Endothelial cell of umbilical vein (primary cell): ENCODE measurements at regions of chr15 and their contacts with region 1.

Region 1: DNA sequence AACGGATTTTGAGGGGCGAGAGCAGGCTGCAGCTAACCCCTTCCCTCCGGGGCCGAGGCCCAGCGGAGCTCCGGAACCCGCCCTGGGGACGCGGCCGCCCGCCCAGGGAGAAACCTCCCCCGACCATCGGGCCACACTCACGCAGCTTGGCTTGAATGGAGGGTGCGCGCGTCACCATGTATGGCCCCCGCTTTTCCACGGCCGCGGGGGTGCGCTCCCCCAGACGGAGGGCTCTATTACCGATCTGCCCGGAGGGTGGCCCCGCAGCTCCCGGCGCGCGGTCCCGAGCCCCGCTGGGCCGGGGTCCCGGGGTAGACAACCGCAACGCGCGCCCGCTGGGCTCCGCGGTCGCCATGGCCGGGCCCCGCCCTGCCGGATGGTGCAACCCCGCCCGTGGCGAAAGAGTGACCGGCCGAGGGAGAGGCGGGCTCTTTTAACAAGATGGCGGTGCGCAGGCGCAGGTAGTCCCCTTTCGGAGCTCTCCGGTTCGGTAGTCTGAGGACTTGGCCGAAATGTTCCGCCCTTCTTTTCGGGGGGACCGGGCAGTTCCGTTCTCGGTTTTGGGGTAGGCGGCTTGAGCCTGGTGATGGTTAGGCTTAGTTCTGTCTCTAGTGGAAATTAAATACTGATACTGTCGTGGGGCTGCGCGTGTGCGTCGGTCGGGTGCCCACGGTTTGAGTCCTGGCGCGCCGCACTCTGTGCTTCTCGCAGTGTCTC is at the start of gene FAM219B:
- DNase-seq: peak; percentile 87
- H3K4me3 ChIP-seq: peak within 1 kb of the TSS; percentile 38 to 79 (median 73)
- H3K27ac ChIP-seq: peak within 1 kb of the TSS; percentile 32
- H3K4me1 ChIP-seq: peaks cover 11% of the 10 kb centered on the region
- H3K27me3 ChIP-seq: no peaks in the 10 kb centered on the region
- CTCF ChIP-seq: no peak
- POLR2A ChIP-seq: peak; percentile 98
- total RNA-seq, gene FAM219B: 57.0 and 73.0 TPM in 2 replicates

Region 2: GRCh38 chr15:74809956-74810355 is 96.6 kb before region 1 on chr15:
- CTCF ChIA-PET with region 1: interaction called, 10 read pairs
- POLR2A ChIA-PET with region 1: no interaction called
- dilution Hi-C with region 1: no loop called
- intact Hi-C with region 1: no loop called
- DNase-seq: no peak
- H3K4me3 ChIP-seq: no peak overlapping the region
- H3K27ac ChIP-seq: no peak overlapping the region
- H3K4me1 ChIP-seq: no peaks in the 10 kb centered on the region
- H3K27me3 ChIP-seq: no peaks in the 10 kb centered on the region
- CTCF ChIP-seq: no peak
- POLR2A ChIP-seq: no peak

Region 3: GRCh38 chr15:74842581-74843444 is 63.8 kb before region 1 on chr15 and contains the start of gene ULK3:
- CTCF ChIA-PET with region 1: interaction called, 37 read pairs
- POLR2A ChIA-PET with region 1: interaction called, 3 read pairs
- dilution Hi-C with region 1: no loop called
- intact Hi-C with region 1: loop called (anchors 1 kb)
- DNase-seq: peak; percentile 81
- H3K4me3 ChIP-seq: peak within 1 kb of the TSS; percentile 61 to 81 (median 71)
- H3K27ac ChIP-seq: peak within 1 kb of the TSS; percentile 60
- H3K4me1 ChIP-seq: peaks cover 11% of the 10 kb centered on the region
- H3K27me3 ChIP-seq: no peaks in the 10 kb centered on the region
- CTCF ChIP-seq: peak; percentile 36 to 57
- POLR2A ChIP-seq: peak; percentile 88
- total RNA-seq, gene ULK3: 29.0 and 36.0 TPM in 2 replicates

Region 4: GRCh38 chr15:74863239-74864056 is 43.2 kb before region 1 on chr15:
- CTCF ChIA-PET with region 1: interaction called, 54 read pairs
- POLR2A ChIA-PET with region 1: no interaction called
- dilution Hi-C with region 1: no loop called
- intact Hi-C with region 1: no loop called
- DNase-seq: no peak
- H3K4me3 ChIP-seq: no peak overlapping the region
- H3K27ac ChIP-seq: no peak overlapping the region
- H3K4me1 ChIP-seq: peaks cover 16% of the 10 kb centered on the region
- H3K27me3 ChIP-seq: no peaks in the 10 kb centered on the region
- CTCF ChIP-seq: no peak
- POLR2A ChIP-seq: no peak

Region 5: GRCh38 chr15:74884428-74885223 is 22.0 kb before region 1 on chr15:
- CTCF ChIA-PET with region 1: interaction called, 28 read pairs
- POLR2A ChIA-PET with region 1: interaction called, 3 read pairs
- dilution Hi-C with region 1: no loop called
- intact Hi-C with region 1: loop called (anchors 1 kb)
- DNase-seq: no peak
- H3K4me3 ChIP-seq: no peak overlapping the region
- H3K27ac ChIP-seq: no peak overlapping the region
- H3K4me1 ChIP-seq: peaks cover 7% of the 10 kb centered on the region
- H3K27me3 ChIP-seq: no peaks in the 10 kb centered on the region
- CTCF ChIP-seq: no peak
- POLR2A ChIP-seq: no peak

Region 6: GRCh38 chr15:74937596-74938296 is 31.1 kb after region 1 on chr15 and contains the start of gene COX5A:
- CTCF ChIA-PET with region 1: interaction called, 9 read pairs
- POLR2A ChIA-PET with region 1: interaction called, 3 read pairs
- dilution Hi-C with region 1: no loop called
- intact Hi-C with region 1: loop called (anchors 1 kb)
- DNase-seq: peak; percentile 98
- H3K4me3 ChIP-seq: peak within 1 kb of the TSS; percentile 92 to 99 (median 99)
- H3K27ac ChIP-seq: peak within 1 kb of the TSS; percentile 60
- H3K4me1 ChIP-seq: peaks cover 7% of the 10 kb centered on the region
- H3K27me3 ChIP-seq: no peaks in the 10 kb centered on the region
- CTCF ChIP-seq: no peak
- POLR2A ChIP-seq: peak; percentile 82
- total RNA-seq, gene COX5A: 220 and 232 TPM in 2 replicates

Region 7: DNA sequence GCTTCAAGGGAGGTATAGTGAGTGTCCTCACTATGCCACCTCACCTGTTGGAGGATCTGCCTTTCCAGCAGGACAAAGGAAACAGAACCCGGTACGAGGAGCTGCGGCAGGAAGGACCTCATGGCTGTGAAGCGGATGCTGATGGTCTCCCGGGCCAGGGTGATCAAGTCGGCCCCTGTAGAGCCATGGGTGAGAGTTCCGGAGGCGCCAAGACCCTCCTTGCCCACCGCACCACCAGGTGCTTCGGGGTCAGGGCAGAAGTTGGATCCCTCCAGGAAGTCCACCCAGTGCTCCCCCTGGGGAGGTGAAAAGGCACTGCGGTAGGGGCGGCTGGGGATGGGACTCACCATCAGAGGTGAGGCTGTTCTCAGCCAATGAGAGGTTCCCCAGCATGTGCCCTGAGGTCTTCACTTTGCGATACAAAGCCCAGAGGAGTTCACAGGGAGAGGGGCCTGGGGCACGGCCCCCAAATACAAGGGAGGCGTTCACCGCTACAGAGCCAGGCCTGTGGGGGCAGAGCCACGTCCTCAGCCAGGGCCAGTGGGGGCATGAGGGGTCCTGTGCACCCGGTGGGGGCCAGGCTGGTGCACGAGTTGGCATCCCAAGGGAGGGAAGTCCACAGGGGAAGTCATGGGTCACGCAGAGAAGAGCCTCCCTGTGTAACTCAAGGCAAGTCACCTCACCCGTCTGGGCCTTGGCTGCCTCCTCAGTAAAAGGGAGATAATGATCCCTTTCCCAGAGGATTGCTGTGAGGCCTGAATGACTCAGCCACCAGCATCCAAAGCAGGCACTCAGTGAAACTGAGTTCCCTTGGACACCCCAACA is 322.8 kb after region 1 on chr15:
- CTCF ChIA-PET with region 1: no interaction called
- POLR2A ChIA-PET with region 1: no interaction called
- dilution Hi-C with region 1: no loop called
- intact Hi-C with region 1: no loop called
- DNase-seq: no peak
- H3K4me3 ChIP-seq: no peak overlapping the region
- H3K27ac ChIP-seq: no peak overlapping the region
- H3K4me1 ChIP-seq: no peaks in the 10 kb centered on the region
- H3K27me3 ChIP-seq: peaks cover under 1 to 1% of the 10 kb centered on the region in 2 experiments
- CTCF ChIP-seq: no peak
- POLR2A ChIP-seq: no peak